ENCODE measurements at regions of chrX and their contacts with region 1.

Region 1: DNA sequence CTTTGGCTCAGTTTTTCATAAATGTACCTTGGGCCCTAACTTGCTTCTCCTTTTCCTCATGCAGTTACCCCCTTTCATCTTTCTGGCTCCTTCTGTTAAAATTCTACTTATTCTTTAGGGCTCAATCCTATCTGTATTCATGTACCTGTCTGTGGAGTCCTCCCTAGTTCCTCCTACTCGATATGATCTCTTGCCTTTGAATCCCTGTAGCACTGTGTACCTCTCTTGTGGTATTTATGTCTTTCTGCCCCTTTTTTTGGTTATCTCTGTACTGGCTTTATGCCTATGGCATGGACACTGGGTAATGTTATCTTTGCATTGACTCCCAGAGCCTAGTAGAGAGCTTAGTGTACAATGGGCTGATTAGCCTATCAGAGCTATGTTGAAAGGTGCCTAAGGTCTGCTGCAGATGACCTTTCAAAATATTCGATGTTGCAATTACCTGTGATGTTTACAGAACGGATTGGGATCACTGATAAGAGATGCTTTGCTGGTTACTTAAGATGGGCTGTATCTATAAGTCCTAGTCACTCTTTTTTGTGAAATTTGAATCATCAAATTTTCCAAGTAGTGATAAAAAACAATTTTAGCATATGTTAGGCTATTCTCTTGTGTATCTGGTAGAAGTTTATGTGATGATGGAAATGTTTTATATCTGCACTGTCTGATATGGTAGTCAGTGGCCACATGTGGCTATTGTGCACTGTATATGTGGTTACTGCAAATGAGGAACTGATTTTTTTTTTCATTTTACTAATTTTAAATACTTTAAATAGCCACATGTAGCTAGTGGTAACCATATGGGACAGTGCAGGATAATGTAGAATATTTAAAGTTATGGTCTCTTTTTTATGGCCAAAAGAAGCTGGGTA is 33.5 kb downstream of the TMEM164 start:
- DNase-seq: no peak
- ATAC-seq: no peak
- H3K4me3 ChIP-seq: no peak overlapping the region
- H3K4me3 Mint-ChIP-seq: no peak overlapping the region
- H3K27ac ChIP-seq: no peak overlapping the region
- H3K27ac Mint-ChIP-seq: no peak overlapping the region
- H3K4me1 ChIP-seq: no peaks in the 10 kb centered on the region
- H3K4me1 Mint-ChIP-seq: peaks cover 0 to 23% (median 4%) of the 10 kb centered on the region in 3 donors
- H3K27me3 ChIP-seq: no peaks in the 10 kb centered on the region
- H3K27me3 Mint-ChIP-seq: peaks cover 0 to 25% of the 10 kb centered on the region in 2 donors

Region 2: GRCh38 chrX:109995155-109995554 is 41.2 kb before region 1 on chrX:
- CTCF ChIA-PET with region 1: interaction called in 1 of 2 experiments, 12 read pairs
- POLR2A ChIA-PET with region 1: no interaction called
- DNase-seq: no peak
- ATAC-seq: no peak
- H3K4me3 ChIP-seq: no peak overlapping the region
- H3K4me3 Mint-ChIP-seq: no peak overlapping the region
- H3K27ac ChIP-seq: no peak overlapping the region
- H3K27ac Mint-ChIP-seq: no peak overlapping the region
- H3K4me1 ChIP-seq: peaks cover 0 to 8% of the 10 kb centered on the region in 2 experiments
- H3K4me1 Mint-ChIP-seq: peaks cover 8 to 24% (median 21%) of the 10 kb centered on the region in 3 donors
- H3K27me3 ChIP-seq: no peaks in the 10 kb centered on the region
- H3K27me3 Mint-ChIP-seq: peaks cover 0 to 17% of the 10 kb centered on the region in 2 donors

Measured in T-cell (primary cell).